Panc1 (cell line): ENCODE measurements at regions of chr20 and their contacts with region 1.

Region 1: DNA sequence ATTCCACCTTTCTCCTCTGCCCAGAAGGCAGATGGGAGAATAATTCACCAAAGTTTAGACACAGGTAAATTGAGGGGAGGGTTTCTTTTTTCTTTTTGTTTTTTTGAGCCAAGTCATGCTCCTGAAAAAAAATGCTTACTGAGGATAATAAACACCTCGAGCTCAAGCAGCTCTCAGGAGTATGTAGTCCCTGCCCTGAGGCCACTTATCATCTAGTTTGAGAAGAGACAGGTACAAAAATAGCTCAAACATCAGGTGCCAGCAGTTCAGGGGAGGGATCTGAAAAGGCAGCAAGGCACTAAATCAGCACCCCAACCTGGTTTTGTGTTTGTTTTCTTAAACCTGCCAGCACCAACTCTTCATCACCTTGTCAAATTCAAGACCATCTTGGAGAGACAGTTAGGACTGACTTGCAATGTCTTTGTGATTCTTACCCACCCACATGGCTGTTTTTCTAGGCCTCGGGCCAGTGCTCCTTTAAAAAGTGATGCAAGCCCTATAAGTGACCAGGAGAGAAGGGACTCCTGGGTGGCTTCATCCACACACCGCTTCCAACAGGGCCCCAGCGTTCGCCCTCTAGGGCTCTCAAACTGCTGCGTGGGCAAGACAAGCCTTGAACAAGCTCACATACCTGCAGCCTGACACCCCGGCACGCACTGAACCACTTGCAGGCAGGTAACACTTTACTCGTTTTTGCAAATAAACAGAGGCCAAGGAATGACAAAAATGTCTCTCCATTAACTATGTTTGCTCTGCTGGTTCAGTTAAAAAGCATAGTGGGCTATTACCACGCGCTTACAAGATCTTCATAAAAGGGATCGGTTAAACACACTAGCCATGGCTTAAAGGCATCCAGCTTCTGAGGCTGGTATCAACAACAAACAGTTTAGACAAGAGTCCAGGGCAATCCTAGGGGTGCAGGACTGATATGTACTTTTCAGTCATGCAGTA is 13.9 kb downstream of the JAG1 start:
- DNase-seq: no peak
- ATAC-seq: no peak; the same call in 1 of the 2 replicates
- H3K4me3 ChIP-seq: no peak overlapping the region
- H3K27ac ChIP-seq: no peak overlapping the region
- H3K4me1 ChIP-seq: peaks cover under 1% of the 10 kb centered on the region; the same call in 1 of the 2 replicates
- H3K27me3 ChIP-seq: no peaks in the 10 kb centered on the region
- CTCF ChIP-seq: no peak

Region 2: GRCh38 chr20:10469599-10469998 is 190.3 kb before region 1 on chr20:
- CTCF ChIA-PET with region 1: no interaction called
- POLR2A ChIA-PET with region 1: interaction called, 12 read pairs
- in situ Hi-C with region 1: no loop called
- intact Hi-C with region 1: no loop called
- DNase-seq: peak; percentile 60
- ATAC-seq: peak; percentile 65; the same call in 1 of the 2 replicates
- H3K4me3 ChIP-seq: no peak overlapping the region
- H3K27ac ChIP-seq: no peak overlapping the region
- H3K4me1 ChIP-seq: no peaks in the 10 kb centered on the region
- H3K27me3 ChIP-seq: no peaks in the 10 kb centered on the region
- CTCF ChIP-seq: peak; percentile 67

Region 3: GRCh38 chr20:10769700-10770099 is 109.8 kb after region 1 on chr20:
- CTCF ChIA-PET with region 1: no interaction called
- POLR2A ChIA-PET with region 1: no interaction called
- in situ Hi-C with region 1: no loop called
- intact Hi-C with region 1: no loop called
- DNase-seq: no peak
- ATAC-seq: no peak
- H3K4me3 ChIP-seq: no peak overlapping the region
- H3K27ac ChIP-seq: no peak overlapping the region
- H3K4me1 ChIP-seq: no peaks in the 10 kb centered on the region
- H3K27me3 ChIP-seq: no peaks in the 10 kb centered on the region
- CTCF ChIP-seq: no peak

Region 4: DNA sequence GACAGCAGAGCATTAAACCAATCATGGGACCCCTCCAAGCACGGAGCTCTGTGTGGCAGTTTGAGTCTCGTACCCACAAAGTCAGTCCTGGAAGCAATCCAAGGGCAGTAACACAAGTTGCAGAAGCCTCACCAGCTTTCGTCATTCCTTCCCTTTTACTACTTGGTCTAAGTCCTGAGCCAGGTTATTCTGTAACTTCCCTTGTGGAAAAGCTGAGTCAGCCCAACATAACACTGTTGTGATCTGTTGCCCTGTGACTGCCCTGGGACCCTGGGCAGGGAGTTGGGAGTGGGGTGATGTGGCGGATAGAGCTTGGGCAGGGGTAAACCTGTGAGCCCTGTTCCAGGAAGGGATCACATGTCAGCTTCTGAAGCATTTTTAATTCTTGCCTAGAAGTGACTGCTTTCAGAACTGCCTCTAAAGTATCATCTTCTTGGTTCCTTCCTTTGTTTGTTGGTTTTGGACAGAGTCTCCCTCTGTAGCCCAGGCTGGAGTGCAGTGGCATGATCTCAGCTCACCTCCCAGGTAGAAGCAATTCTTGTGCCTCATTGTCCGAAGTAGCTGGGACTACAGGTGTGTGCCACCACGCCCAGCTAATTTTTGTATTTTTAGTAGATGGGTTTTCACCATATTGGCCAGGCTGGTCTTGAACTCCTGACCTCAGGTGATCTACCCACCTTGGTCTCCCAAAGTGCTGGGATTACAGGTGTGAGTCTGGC is 197.6 kb after region 1 on chr20:
- CTCF ChIA-PET with region 1: interaction called, 17 read pairs
- POLR2A ChIA-PET with region 1: no interaction called
- in situ Hi-C with region 1: no loop called
- intact Hi-C with region 1: no loop called
- DNase-seq: no peak
- ATAC-seq: no peak
- H3K4me3 ChIP-seq: no peak overlapping the region
- H3K27ac ChIP-seq: no peak overlapping the region
- H3K4me1 ChIP-seq: peaks cover 4% of the 10 kb centered on the region; the same call in 1 of the 2 replicates
- H3K27me3 ChIP-seq: no peaks in the 10 kb centered on the region
- CTCF ChIP-seq: no peak